ENCODE measurements at regions of chr22 and their contacts with region 1.

Region 1: DNA sequence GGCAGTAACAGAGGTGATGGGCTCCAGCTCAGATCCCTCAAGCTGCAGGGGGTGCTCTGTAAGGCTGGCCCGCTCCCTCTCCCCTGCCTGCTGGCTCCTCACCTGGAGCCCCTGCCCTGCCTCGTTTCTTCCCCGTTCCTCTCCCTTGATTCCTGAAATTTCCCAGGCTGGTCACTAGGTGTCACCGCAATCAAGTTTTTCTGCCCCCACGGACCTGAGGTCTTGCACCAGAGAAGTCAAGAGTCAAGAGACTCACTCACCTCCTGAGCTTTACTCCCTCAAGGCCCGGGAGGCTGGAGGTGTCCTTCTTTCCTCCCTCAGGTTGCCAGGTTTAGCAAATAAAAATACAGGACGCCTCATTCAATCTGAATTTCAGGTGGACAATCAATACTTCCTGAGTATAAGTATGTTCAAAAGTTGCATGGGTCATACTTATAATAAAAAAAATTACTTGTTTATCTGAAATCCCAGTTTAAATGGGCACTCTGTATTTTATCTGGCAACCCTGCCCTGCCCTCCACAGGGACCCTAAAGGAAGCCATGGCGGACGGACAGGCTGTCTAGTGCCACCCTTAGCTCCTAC is 69.2 kb downstream of the SCUBE1 start:
- DNase-seq: no peak

Region 2: GRCh38 chr22:43346521-43346929 is 72.5 kb after region 1 on chr22:
- intact Hi-C with region 1: loop called (anchors 2 kb)
- DNase-seq: peak; percentile 84

Region 3: DNA sequence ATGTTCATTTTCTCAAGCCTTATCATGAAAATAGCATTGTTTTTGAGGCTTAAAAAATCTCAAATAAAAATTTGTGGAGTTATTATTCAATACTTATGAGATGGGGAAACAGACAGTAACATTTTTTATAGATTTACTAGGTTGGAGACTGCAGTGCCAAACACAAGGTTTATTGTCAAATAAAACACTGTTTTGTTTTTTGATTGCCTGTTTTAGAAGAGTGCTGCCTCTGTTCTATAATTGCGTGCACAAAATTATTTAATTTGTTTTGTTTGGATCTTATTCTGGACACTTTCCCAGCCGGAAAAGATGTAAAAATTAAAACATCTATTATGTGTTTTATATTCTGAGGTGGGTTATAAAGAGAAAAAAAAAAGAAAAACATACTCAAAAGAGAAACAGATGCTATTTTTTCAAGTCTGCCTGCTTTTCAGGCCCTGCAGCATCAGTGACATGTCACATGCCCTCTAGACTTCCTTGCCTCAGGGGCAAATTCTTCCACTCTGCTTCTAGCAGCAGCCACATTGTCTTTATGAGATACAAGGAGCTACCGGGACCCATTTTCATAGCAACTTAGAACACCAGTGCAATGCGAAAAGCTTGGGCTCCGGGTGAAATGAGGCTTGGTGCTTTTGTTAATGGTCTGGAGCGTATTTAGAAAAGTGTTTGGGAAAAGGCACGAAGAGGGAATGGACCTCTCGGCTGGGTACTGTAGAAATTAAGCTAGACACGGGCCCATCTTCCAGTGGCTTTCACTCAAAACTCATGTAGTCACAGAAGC is 460.6 kb after region 1 on chr22:
- intact Hi-C with region 1: no loop called
- DNase-seq: no peak

Measured in posterior vena cava (tissue), 2 donors.